ENCODE measurements at regions of chr20 and their contacts with region 1.

Region 1: DNA sequence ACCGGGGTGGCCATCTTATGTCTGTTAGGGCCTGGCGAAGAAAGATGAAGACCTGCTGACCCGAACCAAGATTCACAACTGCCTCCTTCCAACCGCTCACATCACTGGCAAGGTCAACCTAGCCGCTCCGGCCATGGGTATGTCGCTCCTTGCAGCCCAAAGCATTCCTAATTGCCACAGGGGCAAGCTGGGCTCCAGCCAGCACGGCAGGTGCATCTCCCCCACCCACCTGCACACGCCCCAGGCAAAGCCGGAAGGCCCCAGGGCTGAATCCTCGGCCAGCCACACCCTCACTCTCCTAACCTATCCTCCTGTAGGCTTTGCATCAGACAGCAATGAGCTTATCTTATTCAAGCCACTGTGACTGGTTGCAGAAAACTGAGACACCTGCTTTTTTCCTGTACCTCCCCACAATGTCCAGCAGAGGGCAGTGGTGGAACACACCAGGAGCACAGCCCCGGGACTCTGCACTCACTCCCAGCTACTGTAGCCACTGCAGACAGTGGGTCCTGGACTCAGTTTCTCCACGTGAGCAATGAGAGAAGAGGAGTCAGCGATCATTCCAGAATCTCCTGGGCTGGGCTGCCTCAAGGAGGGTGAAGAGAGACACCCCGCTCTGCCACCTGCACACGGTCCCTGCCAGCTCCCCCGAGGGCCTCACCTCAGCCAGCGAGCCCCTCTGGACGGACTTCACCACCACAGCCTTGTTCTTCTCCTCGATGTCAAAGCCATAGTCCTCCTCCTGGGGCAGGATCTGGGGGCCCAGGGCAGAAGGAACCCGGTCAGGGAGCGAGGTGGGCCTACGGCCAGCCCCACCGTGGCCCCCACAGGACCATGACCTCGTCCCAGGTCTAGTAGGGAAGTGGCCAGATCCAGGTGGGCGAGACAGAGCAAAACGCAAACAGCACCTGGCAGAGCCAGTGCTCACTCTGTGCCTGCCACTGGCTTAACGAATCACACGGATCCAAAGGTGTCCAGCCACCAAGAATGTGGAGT is 170.0 kb downstream of the PREX1 start:
- DNase-seq: peak; percentile 69 to 85 (median 77)
- H3K4me3 ChIP-seq: no peak overlapping the region
- H3K27ac ChIP-seq: no peak overlapping the region
- H3K4me1 ChIP-seq: no peaks in the 10 kb centered on the region
- H3K27me3 ChIP-seq: no peaks in the 10 kb centered on the region

Region 2: DNA sequence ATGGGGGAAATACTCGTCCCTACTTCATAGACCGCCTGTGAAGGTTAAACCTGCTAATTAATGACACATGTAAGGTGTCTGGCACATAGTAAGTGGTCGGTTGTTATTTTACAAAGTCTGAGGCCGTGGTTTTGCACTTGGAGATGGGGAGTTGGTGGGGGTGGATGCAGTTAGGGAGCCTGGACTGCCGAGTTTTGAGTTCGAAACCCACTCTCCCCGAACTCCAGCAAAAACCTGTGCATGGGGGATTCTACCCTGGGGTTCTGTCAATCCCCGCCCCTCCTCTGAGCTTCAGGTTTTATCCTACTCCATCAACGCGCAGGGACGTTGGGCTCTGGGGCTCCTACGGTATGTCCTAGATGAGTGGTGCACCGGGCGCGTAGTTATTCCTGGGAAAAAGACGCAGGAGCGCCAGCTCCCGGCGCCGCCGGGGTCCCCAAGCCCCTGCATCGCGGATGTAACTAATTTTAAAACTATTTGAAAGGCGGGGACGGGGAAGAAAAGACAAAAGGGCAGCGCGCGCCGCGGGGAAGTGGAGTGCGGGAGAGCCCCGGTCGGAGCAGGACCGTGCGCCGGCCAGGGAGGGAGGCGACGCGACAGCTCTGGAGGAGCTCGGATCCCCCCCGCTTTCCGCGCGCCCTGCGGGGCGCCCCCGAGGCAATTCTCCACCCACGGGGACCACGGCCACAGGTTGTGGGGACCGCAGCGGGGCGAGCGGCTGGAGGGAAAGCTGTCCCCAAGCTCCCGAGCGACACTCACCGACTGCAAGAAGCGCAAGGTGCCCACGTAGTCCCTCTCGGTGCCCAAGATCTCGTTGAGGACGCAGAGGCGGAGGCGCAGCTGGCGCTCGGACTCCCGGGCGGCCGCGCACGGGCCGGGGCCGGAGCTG is 169.4 kb after region 1 on chr20:
- CTCF ChIA-PET with region 1: interaction called, 13 read pairs
- POLR2A ChIA-PET with region 1: no interaction called
- DNase-seq: peak in 2 of 3 donors; percentile 47 to 62
- H3K4me3 ChIP-seq: peak overlapping the region; percentile 74 to 94 (median 87)
- H3K27ac ChIP-seq: peak overlapping the region in 1 of 2 experiments; percentile 66
- H3K4me1 ChIP-seq: peaks cover 31 to 74% (median 68%) of the 10 kb centered on the region in 4 experiments
- H3K27me3 ChIP-seq: no peaks in the 10 kb centered on the region

Region 3: GRCh38 chr20:48850257-48850975 is 192.6 kb after region 1 on chr20:
- CTCF ChIA-PET with region 1: no interaction called
- POLR2A ChIA-PET with region 1: no interaction called
- DNase-seq: no peak
- H3K4me3 ChIP-seq: no peak overlapping the region
- H3K27ac ChIP-seq: no peak overlapping the region
- H3K4me1 ChIP-seq: peaks cover 2 to 30% (median 23%) of the 10 kb centered on the region in 4 experiments
- H3K27me3 ChIP-seq: no peaks in the 10 kb centered on the region

Region 4: DNA sequence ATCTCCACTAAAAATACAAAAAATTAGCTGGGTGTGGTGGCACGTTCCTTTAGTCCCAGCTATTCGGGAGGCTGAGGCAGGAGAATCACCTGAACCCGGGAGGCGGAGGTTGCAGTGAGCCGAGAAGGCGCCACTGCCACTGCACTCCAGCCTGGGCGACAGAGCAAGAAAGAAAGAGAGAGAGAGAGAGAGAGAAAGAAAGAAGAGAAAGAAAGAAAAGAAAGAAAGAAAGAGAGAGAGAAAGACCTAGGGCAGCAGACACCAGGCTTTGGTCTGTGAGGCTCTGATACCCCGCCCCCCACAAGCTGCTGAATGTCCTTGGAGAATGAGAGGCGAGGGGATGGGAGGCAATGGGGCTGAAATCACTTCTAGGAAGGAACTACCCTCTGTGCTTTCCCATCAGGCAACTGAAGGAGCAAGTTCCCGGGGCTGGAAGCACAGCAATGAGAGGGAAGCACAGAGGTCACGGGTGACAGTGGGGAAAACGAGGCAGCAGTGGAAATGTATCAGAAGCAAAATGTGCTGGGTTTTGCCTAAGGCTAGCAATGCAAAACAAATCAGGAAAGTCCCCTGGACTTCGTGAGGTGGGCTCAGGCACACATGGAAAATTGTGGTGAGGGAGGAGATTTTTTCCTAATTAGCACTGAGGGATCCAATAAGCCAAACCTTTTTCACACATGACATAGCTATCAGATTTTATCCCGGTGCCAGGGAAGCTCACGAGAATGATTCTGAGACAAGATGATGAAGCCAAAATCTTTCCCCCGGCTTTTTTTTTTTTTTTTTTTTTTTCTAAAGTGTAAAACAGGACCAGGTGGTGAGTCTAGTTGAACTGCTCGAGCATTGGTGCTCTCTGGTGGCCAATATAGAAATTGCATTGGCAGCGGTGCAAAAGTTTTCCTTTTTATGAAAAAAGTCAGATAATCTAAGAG is 246.9 kb after region 1 on chr20:
- CTCF ChIA-PET with region 1: interaction called, 88 read pairs
- POLR2A ChIA-PET with region 1: no interaction called
- DNase-seq: peak; percentile 70 to 86 (median 80)
- H3K4me3 ChIP-seq: no peak overlapping the region
- H3K27ac ChIP-seq: no peak overlapping the region
- H3K4me1 ChIP-seq: peaks cover 3 to 20% (median 9%) of the 10 kb centered on the region in 4 experiments
- H3K27me3 ChIP-seq: no peaks in the 10 kb centered on the region

Region 5: GRCh38 chr20:48945851-48946514 is 288.2 kb after region 1 on chr20:
- CTCF ChIA-PET with region 1: interaction called, 28 read pairs
- POLR2A ChIA-PET with region 1: interaction called, 3 read pairs
- DNase-seq: no peak
- H3K4me3 ChIP-seq: no peak overlapping the region
- H3K27ac ChIP-seq: no peak overlapping the region
- H3K4me1 ChIP-seq: peaks cover 0 to 9% (median 4%) of the 10 kb centered on the region in 4 experiments
- H3K27me3 ChIP-seq: no peaks in the 10 kb centered on the region

Measured in common myeloid progenitor, CD34-positive (primary cell).